ENCODE measurements at regions of chr1 and their contacts with region 1.

Region 1: DNA sequence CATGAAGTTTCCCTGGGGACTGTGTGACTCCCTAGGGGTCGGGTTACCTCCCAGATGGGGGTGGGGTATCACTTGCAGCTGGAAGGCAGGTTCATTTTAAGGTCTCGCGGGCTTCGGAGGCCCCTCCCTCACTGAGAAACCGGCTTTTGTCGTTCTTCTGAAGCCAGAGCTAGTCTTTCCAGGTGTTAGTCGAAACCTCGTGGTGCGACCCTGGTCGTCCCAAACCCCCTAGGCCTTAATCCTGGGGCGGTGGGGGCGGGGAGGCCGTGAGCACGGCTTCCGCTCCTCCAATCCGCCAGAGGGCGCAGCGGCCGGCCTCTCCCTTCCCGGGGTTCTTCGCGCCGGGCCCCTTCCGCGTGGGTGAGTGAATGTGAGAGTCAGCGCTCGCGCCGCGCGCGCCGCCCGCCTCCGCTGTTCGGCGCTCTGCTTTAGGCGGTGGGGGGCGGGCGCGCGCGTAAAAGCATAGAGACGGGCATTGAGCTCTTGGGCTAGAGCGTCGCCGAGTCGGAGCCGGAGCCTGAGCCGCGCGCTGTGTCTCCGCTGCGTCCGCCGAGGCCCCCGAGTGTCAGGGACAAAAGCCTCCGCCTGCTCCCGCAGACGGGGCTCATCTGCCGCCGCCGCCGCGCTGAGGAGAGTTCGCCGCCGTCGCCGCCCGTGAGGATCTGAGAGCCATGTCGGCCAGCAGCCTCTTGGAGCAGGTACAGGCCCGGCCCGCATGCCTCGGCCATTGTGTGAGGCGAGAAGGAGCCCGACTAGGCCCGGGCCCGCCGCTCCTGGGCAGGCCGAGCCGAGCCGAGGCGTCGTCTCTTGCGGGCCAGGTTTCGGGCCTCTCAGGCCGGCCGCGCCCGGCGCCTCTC is at the start of gene YTHDF2:
- DNase-seq: peak; percentile 97
- ATAC-seq: peak; percentile 95
- H3K4me3 ChIP-seq: peak within 1 kb of the TSS; percentile 90
- H3K27ac ChIP-seq: peak within 1 kb of the TSS; percentile 70
- H3K4me1 ChIP-seq: peaks cover 21% of the 10 kb centered on the region
- H3K27me3 ChIP-seq: no peaks in the 10 kb centered on the region
- CTCF ChIP-seq: peak; percentile 92
- total RNA-seq, gene YTHDF2: 49.8 and 55.0 TPM in 2 replicates

Region 2: DNA sequence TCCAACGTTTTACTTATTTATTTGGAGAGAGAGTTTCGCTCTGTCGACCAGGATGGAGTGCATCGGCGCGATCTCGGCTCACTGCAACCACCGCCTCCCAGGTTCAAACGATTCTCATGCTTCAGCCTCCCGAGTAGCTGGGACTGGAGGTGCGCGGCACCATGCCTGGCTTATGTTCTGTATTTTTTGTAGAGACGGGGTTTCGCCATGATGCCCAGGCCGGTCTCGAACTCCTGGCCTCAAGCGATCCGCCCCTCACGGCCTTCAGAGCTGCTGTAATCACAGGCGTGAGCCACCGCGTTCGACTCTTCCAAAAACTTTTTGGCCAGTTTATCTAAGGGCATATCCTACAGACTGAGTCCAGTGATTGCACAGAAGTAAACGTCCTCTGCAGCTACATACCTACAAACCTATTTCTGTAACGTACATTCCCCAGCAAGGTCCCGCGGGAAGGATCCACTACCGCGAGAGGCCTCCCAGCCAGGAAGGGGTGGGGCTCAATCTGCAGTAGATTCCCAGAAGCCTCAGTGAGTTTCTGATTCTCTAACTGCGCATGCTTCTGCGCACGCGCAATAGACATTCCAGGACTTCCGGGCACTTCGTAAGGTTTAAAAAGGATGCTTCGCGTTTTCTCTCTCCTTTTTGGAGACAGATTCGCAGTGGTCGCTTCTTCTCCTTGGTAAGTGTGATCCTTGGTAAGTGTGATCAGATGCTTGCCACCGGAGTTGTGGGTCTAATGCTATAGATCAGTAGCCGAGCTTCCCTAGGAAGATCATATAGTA is 231.1 kb before region 1 on chr1 and contains the start of gene RCC1:
- CTCF ChIA-PET with region 1: no interaction called
- POLR2A ChIA-PET with region 1: no interaction called
- intact Hi-C with region 1: no loop called
- DNase-seq: peak; percentile 99
- ATAC-seq: peak; percentile 73
- H3K4me3 ChIP-seq: peak within 1 kb of the TSS; percentile 92
- H3K27ac ChIP-seq: peak within 1 kb of the TSS; percentile 75
- H3K4me1 ChIP-seq: peaks cover 36% of the 10 kb centered on the region
- H3K27me3 ChIP-seq: no peaks in the 10 kb centered on the region
- CTCF ChIP-seq: no peak
- total RNA-seq, gene RCC1: 96.5 and 119 TPM in 2 replicates

Region 3: GRCh38 chr1:28648474-28649198 is 88.0 kb before region 1 on chr1 and contains the start of gene RNU11:
- CTCF ChIA-PET with region 1: no interaction called
- POLR2A ChIA-PET with region 1: interaction called, 32 read pairs
- intact Hi-C with region 1: loop called (anchors 1 kb)
- DNase-seq: peak; percentile 98
- ATAC-seq: peak; percentile 80
- H3K4me3 ChIP-seq: peak within 1 kb of the TSS; percentile 48
- H3K27ac ChIP-seq: peak within 1 kb of the TSS; percentile 93
- H3K4me1 ChIP-seq: peaks cover 17% of the 10 kb centered on the region
- H3K27me3 ChIP-seq: no peaks in the 10 kb centered on the region
- CTCF ChIP-seq: no peak
- total RNA-seq, gene RNU11: not detected in 2 replicates

Region 4: DNA sequence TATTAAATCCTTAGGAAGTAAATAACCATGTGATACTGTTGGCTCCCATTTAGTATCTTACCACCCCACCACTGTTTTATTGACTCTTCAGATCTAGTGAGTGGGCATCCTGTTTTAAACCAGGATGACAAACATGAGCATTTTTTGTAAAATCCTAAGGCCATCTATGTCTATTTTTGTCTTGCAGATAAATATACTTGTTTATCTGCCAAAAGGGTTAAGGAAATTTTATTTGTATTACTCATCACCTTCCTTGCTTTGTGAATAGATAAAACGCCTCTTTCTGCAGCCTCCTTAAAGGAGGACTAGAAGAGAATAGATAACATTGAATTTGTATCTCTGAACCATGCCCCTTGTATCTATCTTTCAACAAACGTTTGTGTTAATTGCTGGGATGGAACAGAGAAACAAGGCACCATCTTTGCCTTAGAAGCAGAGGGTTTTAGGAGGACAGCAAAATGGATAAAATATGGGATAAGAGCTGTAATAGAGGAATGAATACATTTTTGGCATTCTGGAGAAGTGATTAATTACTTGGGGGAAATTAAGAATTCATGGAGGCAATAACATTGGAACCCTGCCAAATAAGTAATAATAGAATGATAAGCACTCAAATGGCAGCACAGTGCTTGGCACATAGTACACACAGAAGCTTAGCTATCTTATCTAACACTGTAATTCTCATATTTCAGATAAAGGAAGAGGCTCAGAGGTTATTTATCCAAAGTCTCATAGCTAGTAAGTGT is 14.8 kb after region 1 on chr1:
- CTCF ChIA-PET with region 1: interaction called, 29 read pairs
- POLR2A ChIA-PET with region 1: interaction called, 5 read pairs
- intact Hi-C with region 1: no loop called
- DNase-seq: peak; percentile 75
- ATAC-seq: peak; percentile 58
- H3K4me3 ChIP-seq: 0 out of 2 replicates have a peak overlapping the region, but pooled peaks have one; percentile 19
- H3K27ac ChIP-seq: peak overlapping the region; percentile 36
- H3K4me1 ChIP-seq: peaks cover 35% of the 10 kb centered on the region
- H3K27me3 ChIP-seq: no peaks in the 10 kb centered on the region
- CTCF ChIP-seq: no peak

Region 5: GRCh38 chr1:28792644-28793121 is 56.0 kb after region 1 on chr1:
- CTCF ChIA-PET with region 1: interaction called, 6 read pairs
- POLR2A ChIA-PET with region 1: interaction called, 26 read pairs
- intact Hi-C with region 1: no loop called
- DNase-seq: no peak
- ATAC-seq: no peak
- H3K4me3 ChIP-seq: no peak overlapping the region
- H3K27ac ChIP-seq: no peak overlapping the region
- H3K4me1 ChIP-seq: no peaks in the 10 kb centered on the region
- H3K27me3 ChIP-seq: no peaks in the 10 kb centered on the region
- CTCF ChIP-seq: peak; percentile 30; the same call in 1 of the 2 replicates

Region 6: DNA sequence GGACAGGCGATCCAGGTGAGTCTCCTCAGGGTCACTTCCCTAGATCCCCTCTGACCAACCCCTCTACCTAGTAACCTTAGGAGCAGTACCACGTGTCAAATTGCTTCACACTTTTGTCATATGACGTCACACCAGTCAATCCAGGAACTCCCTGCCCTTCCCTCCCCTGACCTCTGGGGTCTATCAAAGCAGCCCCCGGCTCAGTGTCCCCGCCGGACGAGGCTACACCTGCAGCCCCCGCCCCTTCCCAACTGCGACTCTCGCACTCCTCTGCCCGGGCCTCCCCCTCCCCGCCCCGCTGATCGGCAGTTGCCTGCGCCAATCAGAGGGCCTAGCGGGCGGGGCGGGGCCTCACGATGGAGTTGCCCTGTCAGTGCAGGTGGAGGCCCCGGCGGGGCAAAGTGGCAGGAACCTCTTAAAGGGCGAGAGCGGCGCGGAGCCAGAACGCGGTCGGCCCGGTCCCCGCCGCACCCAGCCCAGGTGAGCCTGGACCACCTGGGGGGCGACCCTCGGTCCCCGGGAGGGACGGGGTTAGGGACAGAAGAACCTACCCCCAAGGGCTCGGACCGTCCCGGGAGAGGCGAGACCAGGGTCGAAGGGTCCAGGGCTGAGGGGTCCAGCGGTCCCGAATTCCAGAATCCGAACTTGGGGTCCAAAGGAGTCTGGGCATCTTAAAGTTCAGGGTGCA is 150.2 kb after region 1 on chr1:
- CTCF ChIA-PET with region 1: interaction called, 11 read pairs
- POLR2A ChIA-PET with region 1: no interaction called
- intact Hi-C with region 1: no loop called
- DNase-seq: peak; percentile 92
- ATAC-seq: peak; percentile 73
- H3K4me3 ChIP-seq: peak overlapping the region; percentile 93
- H3K27ac ChIP-seq: no peak overlapping the region
- H3K4me1 ChIP-seq: peaks cover 17% of the 10 kb centered on the region
- H3K27me3 ChIP-seq: no peaks in the 10 kb centered on the region
- CTCF ChIP-seq: no peak